Activated CD4-positive, alpha-beta T cell treated with anti-CD3 and anti-CD28 coated beads for 36 hours (primary cell): ENCODE measurements at regions of chr6 and their contacts with region 1.

Region 1: DNA sequence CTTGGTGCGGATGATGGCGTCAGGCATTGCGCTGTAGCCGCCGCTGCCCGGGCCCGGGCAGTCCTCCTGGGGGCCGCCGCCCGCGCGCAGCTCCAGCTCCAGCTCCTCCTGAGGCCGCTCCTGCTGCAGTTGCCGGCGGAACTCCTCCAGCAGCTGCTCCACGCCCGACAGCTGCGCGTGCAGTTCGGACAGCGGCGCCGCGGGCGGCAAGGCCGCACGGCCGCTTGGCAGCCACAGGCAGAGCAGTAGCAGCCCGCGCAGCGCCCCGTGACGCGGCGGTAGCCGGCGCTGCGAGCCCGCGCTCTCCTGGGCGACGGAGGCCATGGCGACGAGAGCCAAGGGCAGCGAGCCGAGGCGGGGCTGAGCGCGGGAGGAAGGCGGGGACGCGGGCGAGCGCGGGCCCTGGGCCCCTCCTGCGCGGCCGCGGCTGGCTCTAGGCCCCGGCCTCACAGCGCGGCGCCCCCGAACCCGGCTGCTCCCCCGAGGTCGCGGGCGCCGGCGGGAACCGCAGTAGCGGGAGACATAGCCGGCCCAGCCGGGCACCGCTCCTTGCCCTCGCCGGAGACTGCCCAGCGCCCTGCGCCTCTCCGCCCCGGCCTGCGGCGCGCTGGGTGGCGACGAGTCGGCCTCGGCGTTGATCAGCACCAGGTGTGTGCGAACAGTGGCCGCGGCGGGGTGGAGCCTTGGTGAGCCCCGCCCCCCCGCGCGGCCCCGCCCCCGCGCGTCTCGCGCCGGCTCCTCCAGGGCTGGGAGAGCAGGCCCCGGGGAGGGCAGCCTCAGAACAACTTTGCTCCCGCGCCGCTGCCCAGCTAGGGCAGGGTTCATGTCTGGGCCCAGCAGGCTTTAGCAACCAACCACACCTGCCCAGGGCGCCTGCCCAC is at the start of gene LRP11:
- DNase-seq: peak; percentile 91
- ATAC-seq: peak; percentile 88
- H3K4me3 Mint-ChIP-seq: peak within 1 kb of the TSS; percentile 68
- H3K27ac Mint-ChIP-seq: peak within 1 kb of the TSS; percentile 16
- H3K4me1 Mint-ChIP-seq: peaks cover 10% of the 10 kb centered on the region
- H3K27me3 Mint-ChIP-seq: peaks cover 9% of the 10 kb centered on the region
- total RNA-seq, gene LRP11: 5.1 TPM

Region 2: DNA sequence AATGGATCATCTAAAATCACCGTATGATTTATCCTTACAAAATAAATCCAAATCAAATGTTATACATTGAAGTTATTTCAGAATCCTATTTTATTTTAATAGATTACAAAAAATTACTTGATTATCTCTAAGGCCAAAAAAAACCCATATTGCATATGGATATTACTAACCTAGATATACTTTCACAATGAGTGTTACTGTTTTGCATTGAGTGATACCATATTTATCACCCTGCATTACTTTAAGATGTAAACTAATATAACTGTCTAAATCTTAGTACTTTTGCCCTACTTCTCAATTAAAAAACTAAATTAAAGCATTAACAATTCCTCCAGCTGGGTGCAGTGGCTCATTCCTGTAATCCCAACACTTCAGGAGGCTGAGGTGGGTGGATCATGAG is 329.2 kb before region 1 on chr6:
- CTCF ChIA-PET with region 1: no interaction called
- POLR2A ChIA-PET with region 1: no interaction called
- intact Hi-C with region 1: no loop called
- DNase-seq: no peak
- ATAC-seq: no peak
- H3K4me3 Mint-ChIP-seq: no peak overlapping the region
- H3K27ac Mint-ChIP-seq: no peak overlapping the region
- H3K4me1 Mint-ChIP-seq: peaks cover 16% of the 10 kb centered on the region
- H3K27me3 Mint-ChIP-seq: no peaks in the 10 kb centered on the region

Region 3: GRCh38 chr6:149648148-149649145 is 215.5 kb before region 1 on chr6 and contains the start of gene KATNA1:
- CTCF ChIA-PET with region 1: no interaction called
- POLR2A ChIA-PET with region 1: no interaction called
- intact Hi-C with region 1: loop called in 1 of 2 experiments (anchors 2 kb)
- DNase-seq: peak; percentile 95
- ATAC-seq: peak; percentile 96
- H3K4me3 Mint-ChIP-seq: peak within 1 kb of the TSS; percentile 90
- H3K27ac Mint-ChIP-seq: peak within 1 kb of the TSS; percentile 87
- H3K4me1 Mint-ChIP-seq: peaks cover 20% of the 10 kb centered on the region
- H3K27me3 Mint-ChIP-seq: no peaks in the 10 kb centered on the region
- total RNA-seq, gene KATNA1: 18.1 to 21.6 TPM

Region 4: GRCh38 chr6:149723771-149724417 is 140.0 kb before region 1 on chr6:
- CTCF ChIA-PET with region 1: interaction called, 3 read pairs
- POLR2A ChIA-PET with region 1: no interaction called
- intact Hi-C with region 1: loop called (anchors 2 to 10 kb)
- DNase-seq: peak; percentile 61
- ATAC-seq: peak; percentile 99
- H3K4me3 Mint-ChIP-seq: no peak overlapping the region
- H3K27ac Mint-ChIP-seq: peak overlapping the region; percentile 22
- H3K4me1 Mint-ChIP-seq: peaks cover 16% of the 10 kb centered on the region
- H3K27me3 Mint-ChIP-seq: no peaks in the 10 kb centered on the region

Region 5: GRCh38 chr6:149834513-149835481 is 29.1 kb before region 1 on chr6:
- CTCF ChIA-PET with region 1: interaction called, 7 read pairs
- POLR2A ChIA-PET with region 1: no interaction called
- intact Hi-C with region 1: loop called (anchors 1 kb)
- DNase-seq: peak; percentile 78
- ATAC-seq: peak; percentile 66
- H3K4me3 Mint-ChIP-seq: no peak overlapping the region
- H3K27ac Mint-ChIP-seq: no peak overlapping the region
- H3K4me1 Mint-ChIP-seq: no peaks in the 10 kb centered on the region
- H3K27me3 Mint-ChIP-seq: no peaks in the 10 kb centered on the region

Region 6: GRCh38 chr6:149925974-149926777 is 62.2 kb after region 1 on chr6:
- CTCF ChIA-PET with region 1: interaction called, 4 read pairs
- POLR2A ChIA-PET with region 1: no interaction called
- intact Hi-C with region 1: loop called (anchors 1 to 2 kb)
- DNase-seq: peak; percentile 93
- ATAC-seq: peak; percentile 83
- H3K4me3 Mint-ChIP-seq: peak overlapping the region; percentile 47
- H3K27ac Mint-ChIP-seq: no peak overlapping the region
- H3K4me1 Mint-ChIP-seq: peaks cover 21% of the 10 kb centered on the region
- H3K27me3 Mint-ChIP-seq: peaks cover 80% of the 10 kb centered on the region

Region 7: GRCh38 chr6:150004783-150005717 is 141.1 kb after region 1 on chr6:
- CTCF ChIA-PET with region 1: no interaction called
- POLR2A ChIA-PET with region 1: no interaction called
- intact Hi-C with region 1: loop called in 1 of 2 experiments (anchors 1 kb)
- DNase-seq: peak; percentile 93
- ATAC-seq: peak; percentile 74
- H3K4me3 Mint-ChIP-seq: peak overlapping the region; percentile 75
- H3K27ac Mint-ChIP-seq: no peak overlapping the region
- H3K4me1 Mint-ChIP-seq: peaks cover 59% of the 10 kb centered on the region
- H3K27me3 Mint-ChIP-seq: peaks cover 30% of the 10 kb centered on the region